ENCODE measurements at regions of chr9 and their contacts with region 1.

Region 1: DNA sequence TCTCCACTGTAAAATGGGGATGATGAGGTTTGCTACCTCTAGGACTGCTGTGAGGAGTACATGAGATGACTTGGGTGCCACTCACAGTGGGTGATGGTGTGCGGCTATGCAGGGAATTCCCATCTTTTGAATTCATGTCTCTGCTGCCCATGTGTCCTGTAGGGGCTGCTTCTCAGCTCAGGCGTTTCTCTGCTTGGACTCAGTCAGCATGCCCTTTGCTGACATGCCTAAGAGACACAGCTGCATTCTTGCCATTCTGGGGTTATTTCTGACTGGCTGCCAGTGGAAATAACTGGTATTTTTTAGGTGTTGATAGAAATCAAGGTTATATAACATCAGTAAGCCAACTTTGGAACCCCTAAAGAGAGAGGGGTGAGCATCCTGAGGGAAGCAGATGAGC is 24.3 kb upstream of the XPA start:
- DNase-seq: no peak
- ATAC-seq: no peak
- H3K4me3 ChIP-seq: no peak overlapping the region
- H3K27ac ChIP-seq: no peak overlapping the region
- H3K4me1 ChIP-seq: 0 out of 3 replicates have a peak, but pooled peaks cover 3% of the 10 kb centered on the region
- CTCF ChIP-seq: no peak
- EP300 ChIP-seq: no peak
- POLR2A ChIP-seq: no peak
- RAD21 ChIP-seq: no peak

Region 2: DNA sequence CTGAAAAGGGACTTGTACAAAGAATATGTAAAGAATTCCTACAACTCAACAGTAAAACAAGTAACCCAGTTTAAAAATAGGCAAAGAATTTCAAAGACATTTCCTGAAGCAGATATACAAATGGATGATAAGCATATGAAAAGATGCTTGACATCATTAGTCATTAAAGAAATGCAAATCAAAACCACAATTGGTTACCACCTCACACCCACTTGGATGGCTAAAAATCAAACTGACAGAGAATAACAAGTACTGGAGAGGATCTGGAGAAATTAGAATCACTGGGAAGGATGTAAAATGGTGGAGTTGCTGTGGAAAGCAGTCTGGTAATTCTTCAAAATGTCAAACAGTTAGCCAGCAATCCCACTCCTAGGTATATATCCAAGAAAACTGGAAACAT is 119.1 kb after region 1 on chr9:
- CTCF ChIA-PET with region 1: interaction called, 4 read pairs
- POLR2A ChIA-PET with region 1: interaction called, 13 read pairs
- DNase-seq: no peak
- ATAC-seq: no peak
- H3K4me3 ChIP-seq: no peak overlapping the region
- H3K27ac ChIP-seq: no peak overlapping the region
- H3K4me1 ChIP-seq: no peaks in the 10 kb centered on the region
- CTCF ChIP-seq: no peak
- EP300 ChIP-seq: no peak
- POLR2A ChIP-seq: no peak
- RAD21 ChIP-seq: no peak

Measured in A549 (cell line).